IMR-90 (cell line): ENCODE measurements at regions of chr5 and their contacts with region 1.

Region 1: DNA sequence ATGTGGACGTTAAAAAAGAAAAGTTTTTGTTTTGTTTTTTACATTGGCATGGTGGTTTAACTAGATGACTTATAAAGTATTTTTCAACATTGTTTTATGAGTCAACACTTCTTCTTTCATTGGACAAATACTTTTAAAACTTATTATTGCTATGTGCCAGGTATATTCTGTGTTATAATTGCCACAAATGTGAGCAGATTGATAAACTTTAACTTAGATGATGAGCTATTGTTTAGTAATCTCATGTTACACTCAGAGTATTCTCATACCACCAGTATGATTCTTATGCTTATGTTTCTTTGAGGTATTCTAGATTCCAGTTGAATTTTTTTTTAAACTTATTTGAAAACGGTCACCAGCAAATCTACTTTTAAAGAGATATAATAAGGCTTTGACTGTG is 60.3 kb downstream of the RASA1 start:
- DNase-seq: peak; percentile 50
- ATAC-seq: peak; percentile 68
- H3K4me3 ChIP-seq: no peak overlapping the region
- H3K27ac ChIP-seq: no peak overlapping the region
- H3K4me1 ChIP-seq: peaks cover 12% of the 10 kb centered on the region; the same call in 1 of the 2 replicates
- H3K27me3 ChIP-seq: no peaks in the 10 kb centered on the region
- CTCF ChIP-seq: no peak
- POLR2A ChIP-seq: no peak
- RAD21 ChIP-seq: no peak

Region 2: DNA sequence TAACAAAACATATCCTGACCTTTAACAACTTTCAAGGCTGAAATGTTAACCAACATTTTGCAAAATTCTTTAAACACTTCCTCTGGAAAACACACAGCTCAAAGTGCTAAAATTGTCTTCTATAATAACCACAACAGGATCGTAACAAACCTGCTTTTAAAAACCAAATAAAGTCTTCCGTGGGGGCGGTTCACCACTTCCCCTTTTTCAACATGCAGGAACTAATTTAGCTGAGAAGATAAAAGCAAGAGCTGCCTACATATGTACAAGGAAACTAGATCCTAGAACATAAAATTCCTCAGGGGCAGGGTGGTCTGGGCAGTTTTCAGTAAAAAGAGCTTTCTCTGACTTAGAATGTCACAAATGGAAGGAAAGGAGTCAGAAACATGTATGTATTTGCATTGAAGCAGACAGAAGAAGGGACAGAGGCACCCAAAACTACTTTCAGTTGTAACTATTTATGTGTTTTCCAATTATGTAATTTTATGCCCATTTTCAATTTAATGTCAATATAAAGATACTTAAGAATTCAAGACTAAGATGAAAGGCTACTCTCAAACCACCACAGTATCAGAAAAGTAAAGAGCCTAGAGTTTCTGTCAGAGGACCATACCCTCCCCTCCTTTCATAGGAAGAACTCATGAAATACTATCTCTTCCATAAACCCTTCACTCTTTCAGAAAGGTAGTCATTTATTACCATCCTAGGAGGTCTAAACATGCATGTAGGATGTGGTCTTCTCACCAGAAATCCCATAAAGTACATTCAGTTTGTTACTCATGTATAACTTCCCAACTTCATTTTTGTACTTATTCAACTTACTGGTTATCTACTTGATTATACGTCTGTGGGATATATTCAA is 246.3 kb before region 1 on chr5:
- CTCF ChIA-PET with region 1: no interaction called
- POLR2A ChIA-PET with region 1: interaction called, 24 read pairs
- dilution Hi-C with region 1: no loop called
- in situ Hi-C with region 1: no loop called
- intact Hi-C with region 1: no loop called
- DNase-seq: no peak
- ATAC-seq: no peak
- H3K4me3 ChIP-seq: no peak overlapping the region
- H3K27ac ChIP-seq: no peak overlapping the region
- H3K4me1 ChIP-seq: no peaks in the 10 kb centered on the region
- H3K27me3 ChIP-seq: no peaks in the 10 kb centered on the region
- CTCF ChIP-seq: no peak
- POLR2A ChIP-seq: no peak
- RAD21 ChIP-seq: no peak

Region 3: DNA sequence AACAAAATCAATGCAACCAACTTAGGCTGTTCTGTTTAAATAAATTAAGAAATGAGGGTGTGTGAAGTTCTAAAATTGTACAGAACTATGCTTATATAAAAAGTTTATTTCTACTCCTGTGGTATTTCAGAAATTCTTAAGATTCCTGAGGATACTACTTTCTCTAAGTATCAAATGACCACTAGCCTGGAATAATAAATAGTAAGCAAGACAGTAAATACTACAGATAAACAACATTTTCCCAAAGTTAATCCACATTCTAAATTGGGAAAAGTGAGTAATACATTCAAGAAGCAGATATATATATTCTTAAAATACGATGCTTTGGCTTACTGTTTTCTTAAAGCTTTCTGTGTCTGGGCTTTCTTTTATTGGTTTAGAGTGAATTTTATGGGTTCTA is 55.2 kb after region 1 on chr5:
- CTCF ChIA-PET with region 1: no interaction called
- POLR2A ChIA-PET with region 1: no interaction called
- dilution Hi-C with region 1: no loop called
- in situ Hi-C with region 1: no loop called
- intact Hi-C with region 1: no loop called
- DNase-seq: peak; percentile 82
- ATAC-seq: peak; percentile 95
- H3K4me3 ChIP-seq: no peak overlapping the region
- H3K27ac ChIP-seq: no peak overlapping the region
- H3K4me1 ChIP-seq: peaks cover 5% of the 10 kb centered on the region
- H3K27me3 ChIP-seq: no peaks in the 10 kb centered on the region
- CTCF ChIP-seq: no peak
- POLR2A ChIP-seq: no peak
- RAD21 ChIP-seq: no peak